Kidney (tissue), 22 donors: ENCODE measurements at regions of chr10 and their contacts with region 1.

Region 1: DNA sequence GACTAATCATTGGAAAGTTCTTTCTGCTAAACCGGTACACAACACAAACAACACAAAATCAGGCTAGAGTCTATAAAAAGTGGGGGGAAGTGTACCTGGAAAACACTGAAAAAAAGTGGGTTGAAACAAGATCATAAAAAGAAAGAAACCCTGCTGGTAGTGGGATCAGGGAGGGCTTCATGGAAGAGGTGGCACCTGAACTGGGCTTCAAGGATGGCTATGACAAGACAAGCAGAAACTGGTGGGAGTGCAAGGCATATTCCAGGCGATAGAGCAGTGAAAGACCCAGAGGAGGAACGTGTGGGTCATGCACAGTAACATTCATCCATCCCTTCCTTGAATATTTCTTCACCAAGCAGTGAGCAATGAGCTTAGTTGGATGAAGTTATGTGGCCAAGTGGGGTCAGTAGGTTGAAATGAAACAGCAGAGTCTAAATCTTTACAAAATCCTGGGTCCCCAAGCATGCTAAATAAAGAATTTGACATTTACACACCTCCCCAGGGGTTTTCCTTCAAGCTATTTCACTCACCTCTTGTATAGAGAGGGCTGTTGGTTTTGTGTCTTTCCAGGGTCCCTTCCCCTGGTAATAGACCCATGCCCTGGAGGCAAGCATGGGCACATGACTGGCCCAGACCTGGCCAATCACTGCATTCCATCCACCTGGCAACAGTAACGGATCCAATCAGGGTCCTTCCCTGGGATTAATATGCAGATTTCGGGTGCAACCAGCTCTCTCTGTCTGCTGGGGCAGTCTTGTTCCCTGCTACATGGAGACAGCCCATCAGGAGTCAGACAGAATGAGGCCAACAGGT is 38.2 kb downstream of the SPOCK2 start:
- DNase-seq: no peak
- H3K4me3 ChIP-seq: no peak overlapping the region
- H3K27ac ChIP-seq: no peak overlapping the region
- H3K4me1 ChIP-seq: no peaks in the 10 kb centered on the region
- H3K27me3 ChIP-seq: no peaks in the 10 kb centered on the region
- CTCF ChIP-seq: no peak

Region 2: GRCh38 chr10:71899665-71900412 is 150.3 kb before region 1 on chr10:
- intact Hi-C with region 1: no loop called
- DNase-seq: peak in 1 of 5 donors; percentile 35
- H3K4me3 ChIP-seq: no peak overlapping the region
- H3K27ac ChIP-seq: no peak overlapping the region
- H3K4me1 ChIP-seq: no peaks in the 10 kb centered on the region
- H3K27me3 ChIP-seq: no peaks in the 10 kb centered on the region
- CTCF ChIP-seq: no peak

Region 3: GRCh38 chr10:72223743-72224101 is 173.5 kb after region 1 on chr10:
- intact Hi-C with region 1: loop called (anchors 5 kb)
- DNase-seq: peak in 1 of 5 donors; percentile 15
- H3K4me3 ChIP-seq: no peak overlapping the region
- H3K27ac ChIP-seq: peak overlapping the region in 1 of 2 donors; percentile 84
- H3K4me1 ChIP-seq: peaks cover 0 to 10% (median 5%) of the 10 kb centered on the region in 3 donors
- H3K27me3 ChIP-seq: no peaks in the 10 kb centered on the region
- CTCF ChIP-seq: no peak